Common myeloid progenitor, CD34-positive (primary cell): ENCODE measurements at regions of chr2 and their contacts with region 1.

Region 1: DNA sequence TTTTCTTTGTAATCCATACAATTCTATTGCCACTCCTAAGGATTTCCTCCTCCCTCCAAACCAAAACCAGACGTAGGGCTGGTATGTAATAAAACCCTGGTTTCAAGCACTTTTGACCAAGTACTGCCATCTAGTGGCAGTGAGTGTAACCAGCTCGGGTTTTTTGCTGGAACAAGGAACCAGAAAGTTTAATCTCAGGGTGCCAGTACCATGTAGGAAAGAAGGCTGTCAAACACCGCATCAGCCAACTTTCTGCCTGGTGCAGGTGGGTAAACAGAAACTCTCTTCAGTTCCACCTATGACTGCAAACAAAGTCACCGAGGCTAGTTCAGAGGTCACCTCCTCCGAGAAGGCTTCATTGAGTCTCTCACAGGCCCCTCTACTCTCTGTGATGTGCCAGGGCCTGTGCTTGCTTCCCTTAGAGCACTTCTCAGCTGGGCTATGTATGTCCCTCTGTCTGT is 10.2 kb upstream of the THNSL2 start:
- DNase-seq: peak; percentile 68 to 81 (median 79)
- H3K4me3 ChIP-seq: no peak overlapping the region
- H3K27ac ChIP-seq: no peak overlapping the region
- H3K4me1 ChIP-seq: no peaks in the 10 kb centered on the region
- H3K27me3 ChIP-seq: peaks cover 0 to 2% (median 0%) of the 10 kb centered on the region in 5 experiments

Region 2: DNA sequence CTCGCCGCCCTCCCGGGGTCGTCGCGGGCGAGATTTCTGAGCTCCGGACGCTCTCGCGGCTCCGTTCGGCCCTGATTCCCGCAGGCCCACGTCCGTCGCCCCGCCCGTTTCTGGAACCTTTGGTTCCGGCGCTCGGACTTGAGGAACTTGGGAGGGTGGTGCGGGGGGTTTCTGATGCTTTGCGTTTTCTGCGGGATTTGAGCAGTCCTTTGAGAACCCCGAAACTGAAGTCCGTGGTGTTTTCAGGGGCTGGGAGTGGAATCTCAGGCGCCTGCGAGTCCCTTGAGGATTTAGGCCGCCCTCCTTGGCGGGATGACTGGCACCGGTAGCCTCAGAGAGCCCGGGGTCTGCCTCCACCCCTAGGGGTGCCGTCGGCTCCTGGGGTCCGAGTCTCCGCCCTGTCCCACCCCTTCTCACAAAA is 10.5 kb after region 1 on chr2:
- CTCF ChIA-PET with region 1: interaction called, 11 read pairs
- POLR2A ChIA-PET with region 1: no interaction called
- DNase-seq: peak; percentile 31 to 58 (median 37)
- H3K4me3 ChIP-seq: peak overlapping the region; percentile 43 to 78 (median 56)
- H3K27ac ChIP-seq: no peak overlapping the region
- H3K4me1 ChIP-seq: peaks cover 0 to 4% (median 3%) of the 10 kb centered on the region in 4 experiments
- H3K27me3 ChIP-seq: peaks cover 0 to 22% (median 0%) of the 10 kb centered on the region in 5 experiments